Right ventricle myocardium superior (tissue), 1 donor: ENCODE measurements at regions of chr4 and their contacts with region 1.

Region 1: GRCh38 chr4:94451695-94452475 is at the start of gene PDLIM5:
- DNase-seq: peak; percentile 94
- ATAC-seq: peak; percentile 94
- total RNA-seq, gene PDLIM5: 979 TPM

Region 2: GRCh38 chr4:94406668-94407437 is 45.0 kb before region 1 on chr4:
- intact Hi-C with region 1: loop called (anchors 2 kb)
- DNase-seq: peak; percentile 69
- ATAC-seq: peak; percentile 56

Region 3: GRCh38 chr4:94525993-94526728 is 74.3 kb after region 1 on chr4:
- intact Hi-C with region 1: loop called (anchors 10 kb)
- DNase-seq: no peak
- ATAC-seq: peak; percentile 13

Region 4: GRCh38 chr4:94561249-94562024 is 109.6 kb after region 1 on chr4:
- intact Hi-C with region 1: loop called (anchors 10 kb)
- DNase-seq: no peak
- ATAC-seq: peak; percentile 28

Region 5: DNA sequence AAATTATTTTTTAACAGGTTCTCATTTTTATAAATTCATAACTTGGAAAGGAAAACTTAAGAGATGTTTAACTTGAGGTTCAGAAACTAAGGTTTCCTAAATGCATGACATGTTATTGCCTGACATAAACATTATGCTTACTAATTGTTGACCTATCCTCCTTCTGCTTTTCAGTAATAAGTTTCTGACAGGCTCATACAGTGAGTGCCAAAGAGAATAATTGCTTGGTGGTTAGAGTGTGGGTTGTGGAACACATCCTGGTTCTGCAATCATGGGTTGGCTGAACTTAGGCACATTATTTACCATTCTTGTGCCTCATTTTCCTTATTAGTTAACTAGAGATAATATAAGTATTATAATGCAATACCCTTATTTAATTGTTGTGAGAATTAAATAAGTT is 362.4 kb after region 1 on chr4:
- intact Hi-C with region 1: no loop called
- DNase-seq: no peak
- ATAC-seq: no peak